ENCODE measurements at regions of chr4 and their contacts with region 1.

Region 1: DNA sequence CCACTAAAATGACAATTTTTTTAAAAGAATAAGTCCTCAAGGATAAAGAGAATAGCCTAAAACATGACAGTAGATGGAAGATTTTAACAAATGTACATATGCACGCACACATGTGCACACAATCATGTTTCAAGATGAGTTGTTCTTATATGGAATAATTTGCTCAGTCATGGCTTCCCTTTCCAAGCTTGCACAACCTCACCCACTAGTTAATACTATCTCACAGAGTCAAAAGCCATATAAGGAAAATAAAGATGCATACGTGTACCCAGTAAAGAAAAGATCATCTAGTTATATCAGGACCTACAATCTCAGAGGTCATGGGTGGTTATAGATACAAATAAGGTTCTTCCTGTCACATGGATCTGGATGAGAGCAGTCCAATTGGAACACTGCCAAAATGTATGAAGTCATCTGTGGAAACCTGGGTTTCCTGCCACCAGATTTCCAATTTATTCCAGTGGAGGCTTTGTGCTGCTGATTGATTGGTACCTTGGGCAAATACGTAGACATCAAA is 56.1 kb downstream of the FAM13A start:
- DNase-seq: no peak
- ATAC-seq: peak; percentile 95

Region 2: GRCh38 chr4:88706574-88706973 is 294.3 kb before region 1 on chr4:
- intact Hi-C with region 1: loop called in 1 of 2 experiments (anchors 5 kb)
- DNase-seq: no peak
- ATAC-seq: no peak

Region 3: GRCh38 chr4:89056953-89057398 is 56.1 kb after region 1 on chr4 and contains the start of gene FAM13A:
- intact Hi-C with region 1: no loop called
- DNase-seq: peak; percentile 76 to 77
- ATAC-seq: peak; percentile 95
- total RNA-seq, gene FAM13A: 34.3 to 80.3 TPM

Measured in left colon (tissue), 2 donors.